ENCODE measurements at regions of chr1 and their contacts with region 1.

Region 1: GRCh38 chr1:9874959-9875635 is 35.0 kb downstream of the CTNNBIP1 start:
- DNase-seq: peak; percentile 69 to 77 (median 73)
- ATAC-seq: peak; percentile 85
- H3K4me3 ChIP-seq: no peak overlapping the region
- H3K27ac ChIP-seq: no peak overlapping the region
- H3K4me1 ChIP-seq: peaks cover 8% of the 10 kb centered on the region
- H3K27me3 ChIP-seq: no peaks in the 10 kb centered on the region
- CTCF ChIP-seq: peak; percentile 85 to 95 (median 92)
- POLR2A ChIP-seq: no peak

Region 2: DNA sequence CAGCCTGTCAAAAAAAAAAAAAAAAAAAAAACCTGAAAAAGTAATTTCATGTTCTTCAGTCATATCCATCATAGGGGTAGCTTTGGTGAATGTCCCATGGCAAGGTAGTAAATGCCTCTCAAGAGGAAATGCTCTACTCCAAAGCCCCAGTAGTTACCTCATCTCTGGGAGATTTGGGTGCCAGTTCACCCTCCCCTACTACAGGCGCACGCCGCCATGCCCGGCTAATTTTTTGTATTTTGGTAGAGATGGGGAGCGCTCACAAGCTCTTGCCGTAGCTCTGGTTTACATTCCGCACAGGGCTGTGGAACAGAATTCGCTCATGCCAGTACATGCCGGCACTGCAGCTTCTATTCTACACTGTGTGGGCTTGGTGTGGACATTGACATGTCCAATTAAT is 209.9 kb before region 1 on chr1:
- intact Hi-C with region 1: no loop called
- DNase-seq: no peak
- ATAC-seq: no peak
- H3K4me3 ChIP-seq: no peak overlapping the region
- H3K27ac ChIP-seq: no peak overlapping the region
- H3K4me1 ChIP-seq: no peaks in the 10 kb centered on the region
- H3K27me3 ChIP-seq: peaks cover 0 to 5% of the 10 kb centered on the region in 2 donors
- CTCF ChIP-seq: no peak
- POLR2A ChIP-seq: no peak

Region 3: GRCh38 chr1:10022656-10023055 is 147.6 kb after region 1 on chr1:
- intact Hi-C with region 1: loop called (anchors 10 kb)
- DNase-seq: no peak
- ATAC-seq: no peak
- H3K4me3 ChIP-seq: no peak overlapping the region
- H3K27ac ChIP-seq: no peak overlapping the region
- H3K4me1 ChIP-seq: no peaks in the 10 kb centered on the region
- H3K27me3 ChIP-seq: no peaks in the 10 kb centered on the region
- CTCF ChIP-seq: no peak
- POLR2A ChIP-seq: no peak

Region 4: GRCh38 chr1:10429868-10430215 is 554.7 kb after region 1 on chr1:
- intact Hi-C with region 1: loop called (anchors 10 kb)
- DNase-seq: peak in 2 of 4 donors; percentile 7 to 25
- ATAC-seq: no peak
- H3K4me3 ChIP-seq: peak overlapping the region in 1 of 2 donors; percentile 18
- H3K27ac ChIP-seq: peak overlapping the region in 3 of 4 donors; percentile 23 to 74 (median 61)
- H3K4me1 ChIP-seq: peaks cover 24% of the 10 kb centered on the region
- H3K27me3 ChIP-seq: no peaks in the 10 kb centered on the region
- CTCF ChIP-seq: no peak
- POLR2A ChIP-seq: no peak

Measured in body of pancreas (tissue), 4 donors.